ENCODE measurements at regions of chr10 and their contacts with region 1.

Region 1: GRCh38 chr10:62594093-62594520 is 210.4 kb upstream of the ADO start:
- DNase-seq: peak; percentile 14 to 74 (median 38)
- ATAC-seq: peak; percentile 65
- H3K4me3 ChIP-seq: no peak overlapping the region
- H3K4me3 Mint-ChIP-seq: no peak overlapping the region
- H3K27ac ChIP-seq: no peak overlapping the region
- H3K27ac Mint-ChIP-seq: no peak overlapping the region
- H3K4me1 ChIP-seq: no peaks in the 10 kb centered on the region
- H3K4me1 Mint-ChIP-seq: no peaks in the 10 kb centered on the region
- H3K27me3 ChIP-seq: no peaks in the 10 kb centered on the region
- H3K27me3 Mint-ChIP-seq: no peaks in the 10 kb centered on the region
- CTCF ChIP-seq: peak; percentile 93

Region 2: GRCh38 chr10:62399211-62399610 is 194.9 kb before region 1 on chr10:
- CTCF ChIA-PET with region 1: no interaction called
- POLR2A ChIA-PET with region 1: no interaction called
- intact Hi-C with region 1: no loop called
- DNase-seq: no peak
- ATAC-seq: no peak
- H3K4me3 ChIP-seq: no peak overlapping the region
- H3K4me3 Mint-ChIP-seq: no peak overlapping the region
- H3K27ac ChIP-seq: no peak overlapping the region
- H3K27ac Mint-ChIP-seq: no peak overlapping the region
- H3K4me1 ChIP-seq: no peaks in the 10 kb centered on the region
- H3K4me1 Mint-ChIP-seq: no peaks in the 10 kb centered on the region
- H3K27me3 ChIP-seq: no peaks in the 10 kb centered on the region
- H3K27me3 Mint-ChIP-seq: peaks cover 10% of the 10 kb centered on the region
- CTCF ChIP-seq: no peak

Region 3: DNA sequence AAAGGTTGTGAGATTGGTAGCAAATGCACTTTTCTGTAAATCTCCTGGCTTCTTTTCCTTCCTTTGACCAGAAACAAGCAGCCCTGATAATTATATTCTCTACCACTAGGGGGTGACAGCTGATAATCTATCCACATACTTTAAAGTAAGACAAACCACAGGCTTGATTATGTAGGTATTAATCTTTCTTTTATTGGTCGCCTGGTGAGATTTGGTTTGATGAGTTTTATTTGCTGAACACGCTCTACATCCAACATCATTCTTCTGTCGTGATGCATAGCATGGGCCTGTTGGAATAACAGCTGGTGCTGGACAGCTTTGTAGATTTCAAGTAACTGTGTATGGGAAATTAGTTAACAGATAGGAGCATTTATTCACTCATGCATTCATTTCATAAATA is 156.4 kb before region 1 on chr10:
- CTCF ChIA-PET with region 1: no interaction called
- POLR2A ChIA-PET with region 1: no interaction called
- intact Hi-C with region 1: loop called in 1 of 2 experiments (anchors 5 kb)
- DNase-seq: peak in 5 of 14 experiments; percentile 0 to 74 (median 73)
- ATAC-seq: peak; percentile 59
- H3K4me3 ChIP-seq: no peak overlapping the region
- H3K4me3 Mint-ChIP-seq: no peak overlapping the region
- H3K27ac ChIP-seq: no peak overlapping the region
- H3K27ac Mint-ChIP-seq: no peak overlapping the region
- H3K4me1 ChIP-seq: no peaks in the 10 kb centered on the region
- H3K4me1 Mint-ChIP-seq: no peaks in the 10 kb centered on the region
- H3K27me3 ChIP-seq: no peaks in the 10 kb centered on the region
- H3K27me3 Mint-ChIP-seq: peaks cover 7% of the 10 kb centered on the region
- CTCF ChIP-seq: peak; percentile 83

Region 4: DNA sequence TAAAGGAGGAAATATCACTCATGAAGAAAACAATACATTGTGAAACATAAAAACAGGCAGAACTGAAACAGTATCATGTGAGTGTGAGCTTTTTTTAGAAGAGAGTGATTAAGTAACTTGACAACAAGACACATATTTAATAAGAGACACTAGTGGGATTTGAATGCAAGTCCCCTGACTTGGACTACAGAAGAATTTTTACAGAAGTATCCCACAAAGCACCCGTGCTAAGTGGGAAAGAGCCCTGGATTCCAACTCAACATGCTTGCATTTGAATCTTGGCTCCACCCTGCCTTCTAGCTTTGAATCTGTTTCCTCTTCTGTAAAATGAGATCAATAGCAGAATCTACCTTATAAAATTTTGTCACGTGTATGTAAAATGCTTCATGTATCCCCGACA is 53.7 kb before region 1 on chr10:
- CTCF ChIA-PET with region 1: no interaction called
- POLR2A ChIA-PET with region 1: no interaction called
- intact Hi-C with region 1: no loop called
- DNase-seq: no peak
- ATAC-seq: no peak
- H3K4me3 ChIP-seq: no peak overlapping the region
- H3K4me3 Mint-ChIP-seq: no peak overlapping the region
- H3K27ac ChIP-seq: peak overlapping the region in 1 of 2 donors; percentile 8
- H3K27ac Mint-ChIP-seq: no peak overlapping the region
- H3K4me1 ChIP-seq: no peaks in the 10 kb centered on the region
- H3K4me1 Mint-ChIP-seq: no peaks in the 10 kb centered on the region
- H3K27me3 ChIP-seq: no peaks in the 10 kb centered on the region
- H3K27me3 Mint-ChIP-seq: no peaks in the 10 kb centered on the region
- CTCF ChIP-seq: no peak